ENCODE measurements at regions of chr7 and their contacts with region 1.

Region 1: GRCh38 chr7:73342645-73343044 is 14.7 kb downstream of the FKBP6 start:
- DNase-seq: peak; percentile 74
- H3K4me3 ChIP-seq: no peak overlapping the region
- H3K27ac ChIP-seq: no peak overlapping the region
- H3K4me1 ChIP-seq: peaks cover 0 to 2% of the 10 kb centered on the region in 2 experiments; a peak in 1 of 4 replicates
- H3K27me3 ChIP-seq: no peaks in the 10 kb centered on the region; the same call in 1 of the 2 replicates
- CTCF ChIP-seq: peak; percentile 65
- EP300 ChIP-seq: no peak
- RAD21 ChIP-seq: peak; percentile 74

Region 2: DNA sequence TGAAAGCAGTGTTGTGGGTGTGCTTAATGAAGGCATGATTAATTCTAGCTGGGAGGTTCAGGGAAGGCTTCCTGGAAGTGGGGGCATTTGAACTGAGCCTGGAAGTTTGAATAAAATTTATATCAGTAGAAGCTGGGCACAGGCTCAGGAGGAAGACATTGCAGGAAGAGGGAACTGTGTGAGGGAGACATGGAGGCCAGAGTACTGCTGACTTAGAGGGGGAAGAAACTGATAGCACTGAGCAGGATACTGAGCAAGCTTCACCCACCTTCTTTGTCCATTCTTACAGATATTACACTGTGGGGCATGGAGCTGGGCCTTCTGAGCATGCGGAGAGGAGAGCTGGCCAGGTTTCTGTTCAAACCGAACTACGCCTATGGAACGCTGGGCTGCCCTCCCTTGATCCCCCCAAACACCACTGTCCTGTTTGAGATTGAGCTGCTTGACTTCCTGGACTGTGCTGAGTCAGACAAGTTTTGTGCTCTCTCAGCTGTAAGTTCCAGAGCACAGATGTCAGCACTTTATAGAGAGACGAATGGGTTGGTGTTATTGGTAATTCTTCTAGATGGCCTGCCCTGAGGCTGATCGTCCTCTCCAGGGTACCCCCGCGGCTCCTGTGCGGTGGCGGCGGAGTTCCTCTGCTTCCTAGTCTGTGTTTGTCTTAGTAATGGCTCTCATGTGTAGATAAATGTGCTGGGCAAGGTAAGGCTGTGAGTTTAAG is 12.6 kb before region 1 on chr7:
- CTCF ChIA-PET with region 1: interaction called, 30 read pairs
- POLR2A ChIA-PET with region 1: no interaction called
- DNase-seq: peak; percentile 35
- H3K4me3 ChIP-seq: no peak overlapping the region
- H3K27ac ChIP-seq: no peak overlapping the region
- H3K4me1 ChIP-seq: no peaks in the 10 kb centered on the region
- H3K27me3 ChIP-seq: peaks cover 17% of the 10 kb centered on the region; the same call in 1 of the 2 replicates
- CTCF ChIP-seq: no peak
- EP300 ChIP-seq: no peak
- RAD21 ChIP-seq: no peak

Region 3: GRCh38 chr7:73418113-73418703 is 75.6 kb after region 1 on chr7:
- CTCF ChIA-PET with region 1: no interaction called
- POLR2A ChIA-PET with region 1: no interaction called
- DNase-seq: no peak
- H3K4me3 ChIP-seq: no peak overlapping the region
- H3K27ac ChIP-seq: no peak overlapping the region
- H3K4me1 ChIP-seq: no peaks in the 10 kb centered on the region
- H3K27me3 ChIP-seq: no peaks in the 10 kb centered on the region
- CTCF ChIP-seq: no peak
- EP300 ChIP-seq: no peak
- RAD21 ChIP-seq: 0 out of 2 replicates have a peak, but pooled peaks have one; percentile 7

Region 4: DNA sequence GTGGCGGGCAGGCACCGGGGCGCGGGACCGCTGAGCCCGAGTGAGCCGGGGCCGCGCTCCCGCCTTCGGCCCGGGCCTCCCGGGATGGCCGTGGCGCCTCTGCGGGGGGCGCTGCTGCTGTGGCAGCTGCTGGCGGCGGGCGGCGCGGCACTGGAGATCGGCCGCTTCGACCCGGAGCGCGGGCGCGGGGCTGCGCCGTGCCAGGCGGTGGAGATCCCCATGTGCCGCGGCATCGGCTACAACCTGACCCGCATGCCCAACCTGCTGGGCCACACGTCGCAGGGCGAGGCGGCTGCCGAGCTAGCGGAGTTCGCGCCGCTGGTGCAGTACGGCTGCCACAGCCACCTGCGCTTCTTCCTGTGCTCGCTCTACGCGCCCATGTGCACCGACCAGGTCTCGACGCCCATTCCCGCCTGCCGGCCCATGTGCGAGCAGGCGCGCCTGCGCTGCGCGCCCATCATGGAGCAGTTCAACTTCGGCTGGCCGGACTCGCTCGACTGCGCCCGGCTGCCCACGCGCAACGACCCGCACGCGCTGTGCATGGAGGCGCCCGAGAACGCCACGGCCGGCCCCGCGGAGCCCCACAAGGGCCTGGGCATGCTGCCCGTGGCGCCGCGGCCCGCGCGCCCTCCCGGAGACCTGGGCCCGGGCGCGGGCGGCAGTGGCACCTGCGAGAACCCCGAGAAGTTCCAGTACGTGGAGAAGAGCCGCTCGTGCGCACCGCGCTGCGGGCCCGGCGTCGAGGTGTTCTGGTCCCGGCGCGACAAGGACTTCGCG is 91.5 kb after region 1 on chr7:
- CTCF ChIA-PET with region 1: interaction called, 28 read pairs
- POLR2A ChIA-PET with region 1: no interaction called
- DNase-seq: no peak
- H3K4me3 ChIP-seq: peak overlapping the region; percentile 45 to 61; a peak in 3 of 4 replicates
- H3K27ac ChIP-seq: no peak overlapping the region
- H3K4me1 ChIP-seq: peaks cover 0 to 26% of the 10 kb centered on the region in 2 experiments; a peak in 2 of 4 replicates
- H3K27me3 ChIP-seq: no peaks in the 10 kb centered on the region
- CTCF ChIP-seq: no peak
- EP300 ChIP-seq: no peak
- RAD21 ChIP-seq: no peak

Region 5: GRCh38 chr7:73446682-73447081 is 104.0 kb after region 1 on chr7:
- CTCF ChIA-PET with region 1: interaction called, 68 read pairs
- POLR2A ChIA-PET with region 1: no interaction called
- DNase-seq: no peak
- H3K4me3 ChIP-seq: no peak overlapping the region
- H3K27ac ChIP-seq: no peak overlapping the region
- H3K4me1 ChIP-seq: no peaks in the 10 kb centered on the region
- H3K27me3 ChIP-seq: no peaks in the 10 kb centered on the region
- CTCF ChIP-seq: no peak
- EP300 ChIP-seq: no peak
- RAD21 ChIP-seq: no peak

Measured in SK-N-SH (cell line).